Activated CD4-positive, alpha-beta memory T cell treated with anti-CD3 and anti-CD28 coated beads for 36 hours (primary cell): ENCODE measurements at regions of chr6 and their contacts with region 1.

Region 1: DNA sequence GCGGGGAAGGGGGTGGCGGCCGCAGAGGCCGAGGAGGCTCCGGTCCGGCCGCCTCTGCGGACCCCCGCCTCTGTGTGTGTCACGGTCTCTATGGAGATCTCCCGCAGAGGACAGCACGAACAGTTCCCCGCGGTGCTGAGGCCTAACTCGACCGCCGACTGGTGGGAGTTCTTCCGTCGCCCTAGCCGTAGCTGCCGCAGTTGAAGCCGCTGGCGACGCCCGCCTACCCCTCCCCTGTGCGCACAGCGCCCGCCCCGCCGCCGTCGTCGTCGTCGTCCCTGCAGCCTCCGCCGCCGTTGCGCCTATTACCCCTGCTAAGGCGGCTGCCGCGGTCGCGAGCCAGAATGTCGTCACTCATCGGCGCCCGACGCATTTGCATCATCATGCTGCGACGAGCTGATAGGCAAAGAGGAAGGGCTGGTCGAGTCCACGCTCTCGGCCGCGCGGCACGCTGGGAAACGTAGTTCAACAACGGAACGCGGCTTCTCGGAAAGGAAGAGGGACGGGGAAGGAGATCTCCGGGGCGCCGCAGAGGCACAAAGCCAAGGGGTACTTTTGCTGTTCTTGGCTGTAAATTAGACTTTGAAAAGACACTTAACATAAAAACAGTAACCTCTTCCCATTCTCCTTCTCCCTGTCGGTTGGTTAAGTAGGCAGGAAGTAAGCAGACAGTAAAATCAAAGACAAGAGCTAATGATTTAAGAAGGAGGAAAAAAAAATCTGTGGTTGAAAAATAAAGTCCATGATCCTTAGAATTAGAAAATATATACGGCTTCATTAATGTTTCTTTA is at the start of gene NUP153:
- DNase-seq: peak; percentile 100
- H3K4me3 Mint-ChIP-seq: peak within 1 kb of the TSS; percentile 91
- H3K27ac Mint-ChIP-seq: peak within 1 kb of the TSS; percentile 95
- H3K4me1 Mint-ChIP-seq: peaks cover 26% of the 10 kb centered on the region
- H3K27me3 Mint-ChIP-seq: peaks cover 1% of the 10 kb centered on the region
- total RNA-seq, gene NUP153: 72.4 to 78.2 TPM

Region 2: GRCh38 chr6:16690608-16691198 is 1016.1 kb before region 1 on chr6:
- CTCF ChIA-PET with region 1: no interaction called
- POLR2A ChIA-PET with region 1: no interaction called
- intact Hi-C with region 1: loop called (anchors 10 kb)
- DNase-seq: peak; percentile 82
- H3K4me3 Mint-ChIP-seq: peak overlapping the region; percentile 51
- H3K27ac Mint-ChIP-seq: peak overlapping the region; percentile 90
- H3K4me1 Mint-ChIP-seq: peaks cover 93% of the 10 kb centered on the region
- H3K27me3 Mint-ChIP-seq: no peaks in the 10 kb centered on the region

Region 3: GRCh38 chr6:17599885-17600526 is 106.8 kb before region 1 on chr6 and contains the start of gene FAM8A1:
- CTCF ChIA-PET with region 1: interaction called, 11 read pairs
- POLR2A ChIA-PET with region 1: interaction called, 29 read pairs
- intact Hi-C with region 1: loop called (anchors 1 kb)
- DNase-seq: peak; percentile 98
- H3K4me3 Mint-ChIP-seq: peak within 1 kb of the TSS; percentile 81
- H3K27ac Mint-ChIP-seq: peak within 1 kb of the TSS; percentile 64
- H3K4me1 Mint-ChIP-seq: peaks cover 37% of the 10 kb centered on the region
- H3K27me3 Mint-ChIP-seq: no peaks in the 10 kb centered on the region
- total RNA-seq, gene FAM8A1: 5.0 to 5.1 TPM

Region 4: DNA sequence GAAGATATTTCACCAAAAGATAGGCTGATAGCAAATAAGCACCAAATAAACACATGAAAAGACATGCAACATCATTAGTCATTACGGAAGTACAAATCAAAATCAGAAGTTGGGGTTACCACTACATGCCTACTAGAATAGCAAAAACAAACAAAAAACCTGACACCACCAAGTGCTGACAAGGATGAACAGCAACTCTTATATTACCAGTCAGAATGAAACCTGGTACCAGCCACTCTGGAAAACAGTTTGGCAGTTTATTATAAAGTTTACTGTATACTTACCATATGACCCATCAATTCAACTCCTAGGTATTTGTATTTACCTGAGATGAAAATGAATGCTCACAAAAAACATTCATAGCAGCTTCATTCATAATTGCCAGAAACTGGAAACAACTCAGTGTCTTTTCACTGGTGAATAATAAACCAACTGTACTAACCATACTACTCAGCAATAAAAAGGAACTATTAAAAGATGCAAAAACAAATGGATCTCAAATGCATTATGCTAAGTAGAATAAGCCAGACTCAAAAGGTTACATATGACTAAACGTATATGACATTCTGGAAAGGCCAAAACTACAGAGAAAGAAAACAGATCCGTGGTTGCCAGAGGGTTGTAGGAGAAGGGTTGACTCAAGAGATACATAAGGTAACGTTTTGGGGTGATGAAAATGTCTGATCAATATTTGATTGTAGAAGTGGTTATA is 33.1 kb before region 1 on chr6:
- CTCF ChIA-PET with region 1: interaction called, 16 read pairs
- POLR2A ChIA-PET with region 1: no interaction called
- intact Hi-C with region 1: loop called (anchors 1 kb)
- DNase-seq: no peak
- H3K4me3 Mint-ChIP-seq: no peak overlapping the region
- H3K27ac Mint-ChIP-seq: peak overlapping the region; percentile 73
- H3K4me1 Mint-ChIP-seq: peaks cover 35% of the 10 kb centered on the region
- H3K27me3 Mint-ChIP-seq: no peaks in the 10 kb centered on the region

Region 5: DNA sequence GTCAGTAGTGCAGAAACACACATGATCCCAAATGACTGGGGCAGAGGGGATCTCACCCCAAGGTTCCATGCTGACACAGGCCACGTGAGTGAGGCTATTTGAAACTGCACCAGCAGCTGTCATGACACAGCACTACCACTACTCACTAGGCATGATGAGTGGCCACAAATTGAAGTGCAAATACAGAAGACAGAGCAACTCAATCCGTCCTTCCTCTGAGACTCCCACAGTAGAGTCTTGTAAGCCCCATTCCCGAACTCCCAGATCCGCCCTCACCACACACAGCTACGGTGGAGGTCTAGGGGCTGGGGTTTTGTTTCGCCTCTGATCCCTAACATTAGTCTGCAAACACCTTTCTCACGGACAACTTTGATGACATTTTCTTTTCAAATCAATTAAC is 113.3 kb after region 1 on chr6:
- CTCF ChIA-PET with region 1: interaction called, 7 read pairs
- POLR2A ChIA-PET with region 1: no interaction called
- intact Hi-C with region 1: loop called (anchors 2 kb)
- DNase-seq: no peak
- H3K4me3 Mint-ChIP-seq: no peak overlapping the region
- H3K27ac Mint-ChIP-seq: no peak overlapping the region
- H3K4me1 Mint-ChIP-seq: no peaks in the 10 kb centered on the region
- H3K27me3 Mint-ChIP-seq: peaks cover 2% of the 10 kb centered on the region

Region 6: DNA sequence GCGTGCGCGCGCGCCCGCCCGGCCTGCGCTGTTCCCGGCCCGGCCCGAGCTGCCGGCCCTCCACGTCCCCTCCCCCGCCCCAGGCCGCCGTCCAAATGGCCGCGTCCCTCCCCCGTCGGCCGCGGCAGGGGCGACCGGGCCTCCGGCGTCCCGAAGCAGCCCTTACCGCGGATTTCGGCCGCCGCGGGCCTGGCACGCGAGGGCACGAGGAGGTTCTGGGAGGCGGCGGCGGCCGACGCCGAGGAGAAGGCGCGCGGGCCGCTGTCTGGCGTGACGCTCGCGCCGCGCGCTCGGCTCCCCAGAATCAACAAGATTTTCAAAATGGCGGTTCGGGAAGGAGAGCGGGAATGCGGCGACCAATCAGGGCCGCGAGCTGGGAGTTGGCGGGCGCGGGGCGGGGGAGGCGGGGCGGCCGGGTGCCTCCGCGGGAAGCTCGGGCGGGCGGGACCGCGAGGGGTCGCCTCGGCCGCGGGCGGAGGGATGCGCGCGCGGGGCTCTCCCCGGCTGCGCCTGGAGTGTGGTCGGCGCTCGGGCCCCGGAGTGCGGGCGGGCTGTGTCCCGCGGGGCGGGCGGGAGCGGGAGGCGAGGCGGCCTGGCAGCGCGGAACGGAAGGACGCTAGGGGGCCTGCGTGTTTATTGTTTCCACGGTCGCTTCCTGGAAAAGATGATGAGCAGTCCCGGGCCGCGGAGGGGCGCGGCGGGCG is 557.6 kb after region 1 on chr6 and contains the start of gene DEK:
- CTCF ChIA-PET with region 1: no interaction called
- POLR2A ChIA-PET with region 1: no interaction called
- intact Hi-C with region 1: loop called (anchors 1 kb)
- DNase-seq: peak; percentile 90
- H3K4me3 Mint-ChIP-seq: peak within 1 kb of the TSS; percentile 95
- H3K27ac Mint-ChIP-seq: peak within 1 kb of the TSS; percentile 96
- H3K4me1 Mint-ChIP-seq: peaks cover 49% of the 10 kb centered on the region
- H3K27me3 Mint-ChIP-seq: no peaks in the 10 kb centered on the region
- total RNA-seq, gene DEK: 180 to 182 TPM